Calu3 (cell line): ENCODE measurements at regions of chr16 and their contacts with region 1.

Region 1: DNA sequence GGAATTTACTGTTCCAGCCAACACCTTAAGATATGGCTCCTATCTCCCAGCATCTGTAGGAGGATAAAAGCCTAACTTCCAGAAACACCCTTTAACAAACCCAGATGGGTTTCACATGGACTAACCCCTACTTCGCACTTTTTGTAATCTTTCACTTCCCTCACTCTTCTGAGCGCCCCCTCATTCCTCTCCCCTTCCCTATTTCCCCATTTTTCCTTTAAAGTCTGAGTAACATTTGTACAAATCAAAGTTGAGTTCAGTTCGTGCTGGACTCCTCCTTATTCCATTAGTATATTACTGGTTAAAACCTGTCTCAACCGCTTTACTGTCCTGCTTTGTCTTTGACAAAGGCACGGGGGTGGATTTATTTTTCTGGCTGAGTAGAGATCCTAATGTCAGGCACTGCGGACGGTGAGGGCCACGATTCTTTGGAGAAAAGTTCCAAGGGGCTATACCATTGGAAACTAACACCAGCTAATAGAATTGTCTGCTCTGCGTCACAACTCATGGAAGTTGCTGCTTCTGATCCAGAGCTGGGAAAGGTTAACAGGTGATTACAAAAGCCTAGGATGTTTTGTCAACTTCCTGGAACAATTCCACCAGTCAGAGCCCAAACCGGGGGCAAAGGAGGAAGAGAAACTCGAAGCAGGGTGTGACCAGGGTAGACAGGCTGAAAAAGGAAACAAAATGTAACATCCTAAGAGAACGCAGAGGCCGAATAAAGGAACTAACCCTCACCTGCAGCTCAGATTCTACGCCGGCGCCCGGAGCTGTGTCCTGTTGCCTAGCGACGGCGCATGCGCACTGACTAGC is 12.5 kb downstream of the TAT start:
- DNase-seq: no peak
- H3K4me3 Mint-ChIP-seq: peak overlapping the region; percentile 74
- H3K27ac Mint-ChIP-seq: peak overlapping the region; percentile 92
- H3K4me1 Mint-ChIP-seq: peaks cover 13% of the 10 kb centered on the region
- H3K27me3 Mint-ChIP-seq: no peaks in the 10 kb centered on the region
- CTCF ChIP-seq: no peak

Region 2: GRCh38 chr16:71515026-71515425 is 49.3 kb before region 1 on chr16:
- CTCF ChIA-PET with region 1: no interaction called
- intact Hi-C with region 1: loop called (anchors 1 kb)
- DNase-seq: peak; percentile 93
- H3K4me3 Mint-ChIP-seq: peak overlapping the region; percentile 17
- H3K27ac Mint-ChIP-seq: peak overlapping the region; percentile 82
- H3K4me1 Mint-ChIP-seq: peaks cover 65% of the 10 kb centered on the region
- H3K27me3 Mint-ChIP-seq: no peaks in the 10 kb centered on the region
- CTCF ChIP-seq: no peak

Region 3: DNA sequence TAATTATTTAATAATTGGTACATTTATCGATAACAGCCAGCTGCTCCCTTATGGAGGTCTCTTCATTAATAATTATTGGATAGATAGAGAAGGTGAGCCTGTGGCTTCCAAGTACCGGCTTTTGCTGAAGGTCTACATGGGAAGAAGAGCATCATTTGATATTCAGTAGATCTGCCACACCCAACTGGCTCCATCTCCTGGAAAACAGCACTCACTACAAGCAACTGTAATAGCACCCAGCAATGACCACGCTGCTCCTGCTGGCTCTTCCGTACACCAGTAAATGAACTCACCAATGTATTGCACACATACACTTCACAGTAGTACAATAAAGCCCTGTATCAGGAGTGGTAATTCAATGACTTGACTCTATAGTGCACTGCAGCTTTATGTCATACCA is 81.1 kb after region 1 on chr16:
- CTCF ChIA-PET with region 1: interaction called, 4 read pairs
- intact Hi-C with region 1: loop called (anchors 1 kb)
- DNase-seq: peak; percentile 36
- H3K4me3 Mint-ChIP-seq: no peak overlapping the region
- H3K27ac Mint-ChIP-seq: no peak overlapping the region
- H3K4me1 Mint-ChIP-seq: no peaks in the 10 kb centered on the region
- H3K27me3 Mint-ChIP-seq: no peaks in the 10 kb centered on the region
- CTCF ChIP-seq: peak; percentile 73

Region 4: DNA sequence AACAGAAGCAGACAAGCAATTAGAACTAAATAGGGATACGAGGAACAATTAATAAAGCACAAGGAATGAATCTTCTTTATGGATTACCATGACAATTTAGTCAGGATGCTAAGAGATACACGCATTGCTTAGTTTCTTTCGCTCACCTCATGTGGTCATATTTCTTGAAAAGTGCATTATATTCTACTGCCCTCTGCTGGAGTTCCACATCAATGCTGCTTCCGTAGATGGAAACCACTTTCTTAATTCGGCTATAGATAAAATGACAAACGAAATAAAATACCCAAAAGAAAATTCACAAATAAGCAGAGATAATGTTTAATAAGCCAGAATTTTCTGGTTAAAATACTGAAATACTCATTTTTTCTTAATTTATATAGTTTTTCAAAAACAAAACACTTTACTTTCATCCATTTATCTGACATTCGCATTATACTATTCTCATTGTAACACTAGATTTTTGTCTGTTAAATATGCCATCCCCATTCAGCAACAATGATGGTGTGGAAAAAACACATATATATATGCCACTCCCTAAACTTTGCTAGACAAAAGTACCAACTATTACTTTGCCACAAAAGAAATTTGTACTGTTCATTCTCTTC is 182.2 kb after region 1 on chr16:
- CTCF ChIA-PET with region 1: no interaction called
- intact Hi-C with region 1: loop called (anchors 10 kb)
- DNase-seq: peak; percentile 15
- H3K4me3 Mint-ChIP-seq: no peak overlapping the region
- H3K27ac Mint-ChIP-seq: no peak overlapping the region
- H3K4me1 Mint-ChIP-seq: no peaks in the 10 kb centered on the region
- H3K27me3 Mint-ChIP-seq: no peaks in the 10 kb centered on the region
- CTCF ChIP-seq: peak; percentile 66